ENCODE measurements at regions of chrX and their contacts with region 1.

Region 1: GRCh38 chrX:116490104-116490503 is 27.3 kb upstream of the CT83 start:
- DNase-seq: no peak
- H3K4me3 Mint-ChIP-seq: no peak overlapping the region
- H3K27ac Mint-ChIP-seq: no peak overlapping the region
- H3K4me1 Mint-ChIP-seq: no peaks in the 10 kb centered on the region
- H3K27me3 Mint-ChIP-seq: peaks cover 21% of the 10 kb centered on the region
- CTCF ChIP-seq: peak; percentile 36

Region 2: DNA sequence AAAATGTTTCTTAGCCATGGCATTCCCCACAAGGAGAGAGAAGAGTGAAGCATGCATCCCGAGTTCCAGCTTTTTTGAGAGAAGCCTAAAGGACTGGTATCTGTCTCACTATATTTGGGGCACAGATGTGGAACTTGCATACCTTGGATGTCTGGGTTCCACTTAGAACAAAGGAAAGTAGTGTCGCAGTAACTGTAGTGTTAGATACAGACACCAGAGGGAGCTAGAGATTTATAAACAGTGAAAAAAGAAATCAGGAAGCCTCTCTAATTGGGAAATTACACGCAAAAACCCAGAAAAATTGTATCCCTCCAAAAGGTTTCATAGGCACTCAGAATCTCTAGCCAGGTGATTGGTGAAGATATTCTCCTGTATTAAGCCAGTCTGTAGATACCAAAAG is 285.2 kb before region 1 on chrX:
- CTCF ChIA-PET with region 1: interaction called, 3 read pairs
- POLR2A ChIA-PET with region 1: no interaction called
- intact Hi-C with region 1: loop called (anchors 1 kb)
- DNase-seq: peak; percentile 52
- H3K4me3 Mint-ChIP-seq: no peak overlapping the region
- H3K27ac Mint-ChIP-seq: peak overlapping the region; percentile 63
- H3K4me1 Mint-ChIP-seq: no peaks in the 10 kb centered on the region
- H3K27me3 Mint-ChIP-seq: peaks cover 68% of the 10 kb centered on the region
- CTCF ChIP-seq: peak; percentile 79

Region 3: GRCh38 chrX:116436358-116436816 is 53.7 kb before region 1 on chrX and contains the start of gene SLC6A14:
- CTCF ChIA-PET with region 1: no interaction called
- POLR2A ChIA-PET with region 1: no interaction called
- intact Hi-C with region 1: no loop called
- DNase-seq: peak; percentile 11
- H3K4me3 Mint-ChIP-seq: peak within 1 kb of the TSS; percentile 38
- H3K27ac Mint-ChIP-seq: no peak within 1 kb of the TSS
- H3K4me1 Mint-ChIP-seq: no peaks in the 10 kb centered on the region
- H3K27me3 Mint-ChIP-seq: peaks cover 54% of the 10 kb centered on the region
- CTCF ChIP-seq: no peak
- total RNA-seq, gene SLC6A14: 0.44 TPM in 1 of 2 replicates, not detected in the other

Region 4: DNA sequence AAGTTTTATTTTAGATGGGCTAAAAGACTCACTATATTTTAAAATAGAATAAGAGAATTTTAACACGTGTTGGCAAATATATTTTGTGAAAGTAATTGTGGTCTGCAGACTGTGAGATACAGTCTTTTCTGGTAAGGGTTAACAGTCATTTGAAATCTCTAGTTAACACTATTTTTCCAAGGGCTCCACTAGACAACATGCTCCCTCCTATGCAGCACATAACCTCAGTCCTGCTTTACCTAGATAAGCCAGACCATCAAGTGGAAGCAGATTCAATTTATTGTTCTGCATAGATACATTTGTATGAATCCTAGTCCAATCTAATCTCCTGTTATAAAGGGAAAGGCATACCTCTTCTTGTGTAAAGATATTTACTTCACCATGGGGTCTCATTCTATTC is 105.9 kb after region 1 on chrX:
- CTCF ChIA-PET with region 1: no interaction called
- POLR2A ChIA-PET with region 1: no interaction called
- intact Hi-C with region 1: no loop called
- DNase-seq: no peak
- H3K4me3 Mint-ChIP-seq: no peak overlapping the region
- H3K27ac Mint-ChIP-seq: no peak overlapping the region
- H3K4me1 Mint-ChIP-seq: no peaks in the 10 kb centered on the region
- H3K27me3 Mint-ChIP-seq: no peaks in the 10 kb centered on the region
- CTCF ChIP-seq: no peak

Region 5: GRCh38 chrX:116961872-116962582 is 471.9 kb after region 1 on chrX:
- CTCF ChIA-PET with region 1: interaction called, 9 read pairs
- POLR2A ChIA-PET with region 1: no interaction called
- intact Hi-C with region 1: loop called (anchors 5 kb)
- DNase-seq: peak; percentile 16
- H3K4me3 Mint-ChIP-seq: no peak overlapping the region
- H3K27ac Mint-ChIP-seq: no peak overlapping the region
- H3K4me1 Mint-ChIP-seq: no peaks in the 10 kb centered on the region
- H3K27me3 Mint-ChIP-seq: no peaks in the 10 kb centered on the region
- CTCF ChIP-seq: peak; percentile 19

Region 6: DNA sequence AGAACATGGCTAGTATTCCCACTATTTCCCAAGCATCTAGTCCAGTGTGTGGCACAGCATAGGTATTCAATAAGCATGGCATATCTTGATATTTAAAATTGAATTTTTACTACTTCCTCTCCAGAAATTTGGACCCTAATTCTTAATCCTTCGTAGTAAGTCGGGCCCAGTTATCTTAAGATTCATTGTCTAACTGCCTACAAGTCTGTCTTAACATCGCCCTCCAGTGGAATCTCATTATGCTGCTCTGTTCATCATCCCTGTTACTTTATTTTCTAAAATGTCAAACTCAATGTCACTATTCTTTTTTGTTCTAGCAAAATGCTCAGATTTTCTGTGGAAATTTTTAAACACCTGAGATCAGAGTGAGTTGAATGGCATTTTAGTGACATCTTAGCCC is 1020.3 kb after region 1 on chrX:
- CTCF ChIA-PET with region 1: interaction called, 3 read pairs
- POLR2A ChIA-PET with region 1: no interaction called
- intact Hi-C with region 1: loop called (anchors 2 kb)
- DNase-seq: peak; percentile 48
- H3K4me3 Mint-ChIP-seq: no peak overlapping the region
- H3K27ac Mint-ChIP-seq: no peak overlapping the region
- H3K4me1 Mint-ChIP-seq: no peaks in the 10 kb centered on the region
- H3K27me3 Mint-ChIP-seq: no peaks in the 10 kb centered on the region
- CTCF ChIP-seq: peak; percentile 28

Region 7: DNA sequence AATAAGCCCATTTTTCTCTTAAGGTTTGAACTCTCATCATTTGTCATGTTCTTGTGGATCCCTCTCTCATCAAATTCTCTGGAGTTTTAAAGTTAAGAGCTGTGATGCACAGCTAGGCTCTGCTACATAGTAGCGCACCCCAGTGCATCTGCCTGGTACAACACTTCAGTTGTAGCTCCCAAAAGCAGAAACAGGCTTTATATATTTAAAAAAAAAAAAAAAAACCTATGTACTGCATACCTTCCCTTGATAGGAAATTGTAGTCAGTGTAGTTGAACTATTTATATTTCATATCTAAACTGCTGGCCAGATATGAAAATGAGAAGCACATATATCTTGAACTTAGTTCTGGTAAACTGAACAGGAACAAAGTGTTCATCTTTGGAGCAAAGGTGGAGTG is 1495.1 kb after region 1 on chrX:
- CTCF ChIA-PET with region 1: no interaction called
- POLR2A ChIA-PET with region 1: no interaction called
- intact Hi-C with region 1: loop called (anchors 10 kb)
- DNase-seq: no peak
- H3K4me3 Mint-ChIP-seq: no peak overlapping the region
- H3K27ac Mint-ChIP-seq: no peak overlapping the region
- H3K4me1 Mint-ChIP-seq: peaks cover 9% of the 10 kb centered on the region
- H3K27me3 Mint-ChIP-seq: peaks cover 7% of the 10 kb centered on the region
- CTCF ChIP-seq: no peak

Region 8: DNA sequence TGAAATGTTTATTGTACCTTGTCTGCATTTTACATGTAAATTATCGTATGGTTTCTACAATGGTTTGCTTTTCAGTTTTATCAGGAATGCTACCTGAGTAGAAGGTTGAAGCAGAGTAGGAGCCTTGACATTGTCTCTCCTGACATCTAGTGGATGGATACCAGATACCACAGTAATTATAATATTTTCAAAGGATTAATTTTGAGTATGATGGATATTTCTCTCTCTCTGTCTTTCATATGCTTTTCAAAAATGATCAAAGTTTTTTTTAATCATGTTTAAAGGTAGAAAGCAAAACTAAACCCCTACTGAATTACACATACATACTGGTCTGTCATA is 1736.0 kb after region 1 on chrX:
- CTCF ChIA-PET with region 1: no interaction called
- POLR2A ChIA-PET with region 1: no interaction called
- intact Hi-C with region 1: loop called (anchors 10 kb)
- DNase-seq: peak; percentile 50
- H3K4me3 Mint-ChIP-seq: peak overlapping the region; percentile 55
- H3K27ac Mint-ChIP-seq: peak overlapping the region; percentile 77
- H3K4me1 Mint-ChIP-seq: peaks cover 14% of the 10 kb centered on the region
- H3K27me3 Mint-ChIP-seq: peaks cover 29% of the 10 kb centered on the region
- CTCF ChIP-seq: peak; percentile 53

Region 9: GRCh38 chrX:118254611-118255010 is 1764.5 kb after region 1 on chrX:
- CTCF ChIA-PET with region 1: interaction called, 8 read pairs
- POLR2A ChIA-PET with region 1: no interaction called
- intact Hi-C with region 1: loop called (anchors 10 kb)
- DNase-seq: peak; percentile 57
- H3K4me3 Mint-ChIP-seq: no peak overlapping the region
- H3K27ac Mint-ChIP-seq: no peak overlapping the region
- H3K4me1 Mint-ChIP-seq: no peaks in the 10 kb centered on the region
- H3K27me3 Mint-ChIP-seq: peaks cover 31% of the 10 kb centered on the region
- CTCF ChIP-seq: peak; percentile 59

Measured in MCF 10A (cell line).